AG04449 (cell line): ENCODE measurements at regions of chr15 and their contacts with region 1.

Region 1: GRCh38 chr15:63752075-63752684 is 81.6 kb downstream of the HERC1 start:
- DNase-seq: peak; percentile 7
- H3K4me3 ChIP-seq: no peak overlapping the region
- CTCF ChIP-seq: peak; percentile 57

Region 2: GRCh38 chr15:63610200-63610841 is 141.9 kb before region 1 on chr15:
- CTCF ChIA-PET with region 1: interaction called, 19 read pairs
- POLR2A ChIA-PET with region 1: no interaction called
- DNase-seq: no peak
- H3K4me3 ChIP-seq: no peak overlapping the region
- CTCF ChIP-seq: peak; percentile 82

Region 3: DNA sequence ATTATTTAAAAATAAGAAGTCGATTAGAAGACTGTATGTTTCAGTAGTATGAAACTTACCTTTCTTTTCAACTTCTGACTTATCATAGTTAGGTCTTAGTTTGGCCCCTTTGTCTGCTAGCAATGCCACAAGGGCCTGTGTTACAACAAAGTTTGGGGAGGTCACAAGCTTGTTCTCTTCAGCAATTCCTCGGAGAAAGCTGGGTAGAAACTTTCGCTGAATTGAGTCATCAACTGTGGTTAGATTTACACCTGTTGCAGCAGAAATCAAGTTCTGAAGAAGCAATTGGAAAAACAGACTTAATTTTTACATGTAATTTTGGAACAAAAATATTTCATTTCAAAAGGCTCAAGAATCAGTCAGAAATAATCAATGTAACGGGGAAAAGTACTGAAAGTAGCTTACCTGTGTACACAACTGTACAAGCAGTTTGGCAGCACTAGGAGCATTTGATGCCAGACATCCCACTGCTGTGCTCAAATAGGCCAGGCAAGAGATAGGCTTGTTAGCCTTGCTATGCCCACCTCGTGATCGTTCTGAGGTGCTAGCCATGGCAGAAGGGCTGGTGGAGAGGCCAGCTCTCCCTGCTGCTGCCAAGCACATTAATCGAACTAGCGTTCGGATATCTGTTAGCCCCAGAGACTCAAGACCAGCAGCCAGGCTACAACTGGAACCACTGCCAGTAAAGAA is 96.4 kb before region 1 on chr15:
- CTCF ChIA-PET with region 1: no interaction called
- POLR2A ChIA-PET with region 1: no interaction called
- DNase-seq: no peak
- H3K4me3 ChIP-seq: no peak overlapping the region
- CTCF ChIP-seq: no peak

Region 4: GRCh38 chr15:63775303-63775702 is 23.1 kb after region 1 on chr15:
- CTCF ChIA-PET with region 1: interaction called, 14 read pairs
- POLR2A ChIA-PET with region 1: no interaction called
- DNase-seq: no peak
- H3K4me3 ChIP-seq: no peak overlapping the region
- CTCF ChIP-seq: no peak

Region 5: GRCh38 chr15:63881431-63881830 is 129.3 kb after region 1 on chr15:
- CTCF ChIA-PET with region 1: interaction called, 11 read pairs
- POLR2A ChIA-PET with region 1: no interaction called
- DNase-seq: no peak
- H3K4me3 ChIP-seq: no peak overlapping the region
- CTCF ChIP-seq: no peak

Region 6: DNA sequence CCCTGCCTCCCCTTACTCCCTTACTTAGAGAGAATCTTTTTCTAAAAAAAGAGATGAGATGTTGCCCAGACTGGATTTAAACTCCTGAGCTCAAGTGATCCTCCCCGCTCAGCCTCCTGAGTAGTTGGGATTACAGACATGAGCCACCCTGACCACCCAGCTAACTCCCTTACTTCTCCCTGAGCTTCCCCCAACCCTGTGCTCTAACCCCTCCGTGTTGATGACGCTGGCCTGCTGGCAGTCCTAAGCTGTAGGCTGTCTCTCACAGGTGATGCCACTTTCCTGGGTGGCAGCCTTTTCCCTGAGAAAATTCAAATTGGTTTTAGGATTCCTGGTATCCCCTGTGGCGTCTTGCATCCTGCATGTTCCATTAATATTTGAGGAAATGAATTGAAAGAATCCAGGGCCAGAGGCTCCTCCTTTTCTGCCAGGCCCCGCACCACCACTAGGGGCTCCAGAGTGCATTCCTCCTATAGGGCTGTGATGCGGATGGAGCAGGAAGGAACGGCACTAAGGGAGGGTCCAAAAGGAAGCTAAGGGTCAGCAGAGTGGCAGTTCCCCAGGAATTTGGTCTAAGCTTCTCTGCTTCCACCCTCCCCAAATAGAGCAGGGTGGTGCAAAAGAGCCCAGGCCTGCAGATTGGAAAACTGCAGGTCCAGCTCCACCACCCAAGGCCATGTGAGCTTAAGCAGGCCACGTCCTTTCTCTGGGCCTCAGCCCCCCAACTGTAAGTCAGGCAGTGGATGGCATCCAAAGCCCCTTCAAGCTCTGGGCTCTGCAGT is 193.0 kb after region 1 on chr15:
- CTCF ChIA-PET with region 1: interaction called, 13 read pairs
- POLR2A ChIA-PET with region 1: no interaction called
- DNase-seq: no peak
- H3K4me3 ChIP-seq: no peak overlapping the region
- CTCF ChIP-seq: peak; percentile 82

Region 7: DNA sequence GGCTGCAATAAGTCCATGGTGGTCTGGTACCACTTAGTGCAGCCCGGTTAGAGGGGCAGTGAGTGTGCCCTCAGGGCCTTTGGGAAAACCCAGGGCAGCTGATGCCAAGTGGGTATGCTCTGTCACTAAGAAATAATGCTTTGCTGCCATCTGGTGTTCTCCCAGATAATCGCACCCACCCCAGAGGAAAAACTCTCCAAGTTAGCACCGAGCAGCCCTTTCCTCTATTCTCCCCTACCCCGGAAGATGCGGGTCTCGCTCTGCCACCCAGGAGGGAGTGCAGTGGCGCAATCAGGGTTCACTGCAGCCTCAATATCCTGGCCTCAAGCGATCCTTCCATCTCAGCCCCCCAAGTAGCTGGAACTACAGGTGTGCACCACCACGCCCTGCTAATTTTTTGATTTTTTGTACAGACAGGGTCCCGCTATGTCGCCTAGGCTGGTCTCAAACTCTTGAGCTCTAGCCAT is 315.4 kb after region 1 on chr15:
- CTCF ChIA-PET with region 1: interaction called, 215 read pairs
- POLR2A ChIA-PET with region 1: no interaction called
- DNase-seq: no peak
- H3K4me3 ChIP-seq: no peak overlapping the region
- CTCF ChIP-seq: peak; percentile 66